Activated CD8-positive, alpha-beta T cell treated with anti-CD3 and anti-CD28 coated beads, Interleukin-2, amount 10 ng/mL, durations not matched to agents 7 days and 5 days (primary cell): ENCODE measurements at regions of chr16 and their contacts with region 1.

Region 1: DNA sequence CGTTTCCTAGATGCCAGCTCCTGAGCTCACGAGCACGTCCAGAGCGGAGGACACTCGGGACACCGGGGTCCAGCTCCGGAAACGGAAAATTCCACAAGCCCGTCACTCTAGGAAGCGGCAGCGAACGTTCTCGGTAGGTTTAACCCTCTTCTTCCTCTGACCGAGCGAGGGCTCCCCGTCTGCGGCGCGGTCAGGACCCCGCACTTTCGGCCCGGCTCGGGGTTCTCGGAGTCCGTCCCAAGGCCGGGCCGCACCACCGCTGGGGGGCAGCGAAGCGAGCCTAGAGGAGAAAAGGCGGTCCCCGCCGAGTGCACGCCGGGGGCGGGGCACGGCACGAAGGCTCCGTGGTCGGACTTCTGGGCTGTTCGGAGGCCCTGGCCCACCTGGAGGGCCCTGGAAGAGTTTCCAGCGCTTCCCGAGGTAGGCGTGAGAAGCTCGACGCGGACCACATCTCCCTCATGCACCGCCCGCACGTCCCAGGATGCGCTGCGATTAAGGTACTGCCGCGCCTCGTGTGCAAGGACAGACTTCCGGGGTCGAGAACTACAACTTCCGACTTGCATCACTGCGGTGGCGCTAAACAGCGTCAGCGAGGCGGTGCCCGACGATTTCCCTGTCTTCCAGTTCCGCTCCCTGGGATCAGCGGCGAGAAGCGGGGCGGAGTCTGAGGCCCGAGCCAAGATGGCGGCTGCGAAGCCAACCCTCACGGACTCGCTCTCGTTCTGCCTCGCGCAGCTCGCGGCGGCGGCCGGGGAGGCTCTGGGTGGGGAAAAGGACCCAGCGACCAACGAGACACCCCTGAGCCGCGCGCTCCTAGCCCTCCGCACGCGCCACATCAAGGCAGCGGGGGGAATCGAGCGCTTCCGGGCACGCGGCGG is at the start of gene ARMC5:
- DNase-seq: peak; percentile 98
- ATAC-seq: peak; percentile 74
- H3K4me3 Mint-ChIP-seq: peak within 1 kb of the TSS; percentile 91
- H3K27ac Mint-ChIP-seq: peak within 1 kb of the TSS; percentile 99
- H3K4me1 Mint-ChIP-seq: peaks cover 48% of the 10 kb centered on the region
- H3K27me3 Mint-ChIP-seq: no peaks in the 10 kb centered on the region
- total RNA-seq, gene ARMC5: 18.9 to 19.1 TPM

Region 2: GRCh38 chr16:31064882-31065461 is 394.1 kb before region 1 on chr16:
- CTCF ChIA-PET with region 1: no interaction called
- POLR2A ChIA-PET with region 1: no interaction called
- DNase-seq: no peak
- ATAC-seq: peak; percentile 53
- H3K4me3 Mint-ChIP-seq: peak overlapping the region; percentile 73
- H3K27ac Mint-ChIP-seq: peak overlapping the region; percentile 89
- H3K4me1 Mint-ChIP-seq: peaks cover 62% of the 10 kb centered on the region
- H3K27me3 Mint-ChIP-seq: no peaks in the 10 kb centered on the region

Region 3: GRCh38 chr16:31179747-31180459 is 279.2 kb before region 1 on chr16 and contains the start of gene FUS:
- CTCF ChIA-PET with region 1: interaction called, 3 read pairs
- POLR2A ChIA-PET with region 1: interaction called, 26 read pairs
- DNase-seq: peak; percentile 92
- ATAC-seq: peak; percentile 56
- H3K4me3 Mint-ChIP-seq: peak within 1 kb of the TSS; percentile 94
- H3K27ac Mint-ChIP-seq: peak within 1 kb of the TSS; percentile 97
- H3K4me1 Mint-ChIP-seq: peaks cover 56% of the 10 kb centered on the region
- H3K27me3 Mint-ChIP-seq: no peaks in the 10 kb centered on the region
- total RNA-seq, gene FUS: 536 to 569 TPM

Region 4: GRCh38 chr16:31202414-31203375 is 256.4 kb before region 1 on chr16 and contains the start of gene PYCARD:
- CTCF ChIA-PET with region 1: interaction called, 20 read pairs
- POLR2A ChIA-PET with region 1: interaction called, 4 read pairs
- DNase-seq: peak; percentile 58
- ATAC-seq: peak; percentile 37
- H3K4me3 Mint-ChIP-seq: peak within 1 kb of the TSS; percentile 89
- H3K27ac Mint-ChIP-seq: peak within 1 kb of the TSS; percentile 64
- H3K4me1 Mint-ChIP-seq: peaks cover 62% of the 10 kb centered on the region
- H3K27me3 Mint-ChIP-seq: no peaks in the 10 kb centered on the region
- total RNA-seq, gene PYCARD: 97.7 to 99.5 TPM

Region 5: DNA sequence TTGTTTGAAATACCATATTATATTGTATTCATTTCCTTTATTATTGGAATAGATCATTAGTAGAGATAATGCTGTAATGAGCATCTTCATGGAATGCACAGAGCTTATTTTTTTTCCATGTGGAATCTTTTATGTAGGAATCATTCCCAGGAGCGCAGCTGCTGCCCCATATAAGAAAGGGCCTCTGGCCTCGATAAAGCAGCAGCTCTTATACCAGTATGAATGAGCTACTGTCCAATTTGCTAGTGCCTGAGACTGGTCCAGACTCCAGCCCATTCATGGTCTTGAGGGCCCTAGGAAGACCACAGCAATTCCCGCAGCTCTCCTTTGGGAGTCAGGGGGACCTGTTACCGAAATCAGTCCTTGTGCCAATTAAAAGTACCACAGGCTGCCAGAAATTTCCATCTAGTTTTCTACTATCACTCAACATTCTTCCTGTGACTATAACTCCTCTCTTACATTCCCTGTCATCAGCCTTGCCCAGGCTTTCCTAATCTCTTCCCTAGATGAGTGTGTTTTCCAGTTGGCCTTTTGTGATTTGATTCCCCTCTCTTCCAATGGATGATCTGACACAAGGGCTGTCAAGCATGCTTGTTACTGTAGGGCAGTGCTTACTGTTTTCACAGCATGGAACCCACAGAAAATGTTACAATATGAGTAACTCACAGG is 18.4 kb before region 1 on chr16:
- CTCF ChIA-PET with region 1: interaction called, 40 read pairs
- POLR2A ChIA-PET with region 1: interaction called, 4 read pairs
- DNase-seq: no peak
- ATAC-seq: no peak
- H3K4me3 Mint-ChIP-seq: no peak overlapping the region
- H3K27ac Mint-ChIP-seq: no peak overlapping the region
- H3K4me1 Mint-ChIP-seq: peaks cover 29% of the 10 kb centered on the region
- H3K27me3 Mint-ChIP-seq: peaks cover 5% of the 10 kb centered on the region

Region 6: DNA sequence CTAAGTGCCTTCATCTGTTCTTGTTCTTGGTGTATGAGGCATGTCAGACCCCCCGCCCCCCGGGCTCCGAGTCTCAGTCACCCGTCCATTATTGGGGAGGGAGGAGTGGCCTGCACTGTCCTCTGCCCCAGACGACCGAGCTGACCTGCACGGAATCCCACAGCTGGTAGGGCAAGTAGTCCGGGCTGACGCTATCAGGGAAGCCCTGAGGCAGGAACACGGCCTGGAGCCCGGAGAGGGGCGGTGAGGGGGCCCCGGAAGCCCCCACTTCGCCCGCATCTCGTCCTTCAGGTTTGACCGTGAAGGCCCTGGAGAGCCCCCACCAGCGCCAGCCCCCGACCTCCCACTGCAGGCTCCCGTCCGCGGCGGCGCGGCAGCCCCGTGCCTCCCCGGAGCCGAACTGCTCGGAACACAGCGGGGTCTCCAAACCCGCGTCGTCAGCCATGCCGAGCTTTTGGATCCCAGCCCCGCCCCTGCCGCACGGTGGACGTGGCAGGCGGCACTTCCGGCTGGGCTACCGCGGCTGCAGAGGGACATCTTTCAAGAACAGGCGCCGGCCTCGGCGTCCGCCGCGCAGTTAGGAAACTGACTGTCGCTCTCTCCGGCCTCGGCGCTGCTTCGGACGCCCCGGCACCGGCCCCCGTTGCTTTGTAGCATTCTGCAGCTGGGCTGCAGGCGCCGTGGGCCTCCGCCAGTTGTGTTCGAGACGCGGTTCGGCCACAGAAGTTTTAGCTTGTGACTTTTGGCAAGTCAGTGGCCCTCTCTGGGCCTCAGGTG is 49.0 kb after region 1 on chr16 and contains the start of gene RUSF1:
- CTCF ChIA-PET with region 1: interaction called, 5 read pairs
- POLR2A ChIA-PET with region 1: interaction called, 15 read pairs
- DNase-seq: peak; percentile 89
- ATAC-seq: peak; percentile 91
- H3K4me3 Mint-ChIP-seq: peak within 1 kb of the TSS; percentile 96
- H3K27ac Mint-ChIP-seq: peak within 1 kb of the TSS; percentile 94
- H3K4me1 Mint-ChIP-seq: peaks cover 47% of the 10 kb centered on the region
- H3K27me3 Mint-ChIP-seq: no peaks in the 10 kb centered on the region
- total RNA-seq, gene RUSF1: 31.7 to 32.8 TPM

Region 7: DNA sequence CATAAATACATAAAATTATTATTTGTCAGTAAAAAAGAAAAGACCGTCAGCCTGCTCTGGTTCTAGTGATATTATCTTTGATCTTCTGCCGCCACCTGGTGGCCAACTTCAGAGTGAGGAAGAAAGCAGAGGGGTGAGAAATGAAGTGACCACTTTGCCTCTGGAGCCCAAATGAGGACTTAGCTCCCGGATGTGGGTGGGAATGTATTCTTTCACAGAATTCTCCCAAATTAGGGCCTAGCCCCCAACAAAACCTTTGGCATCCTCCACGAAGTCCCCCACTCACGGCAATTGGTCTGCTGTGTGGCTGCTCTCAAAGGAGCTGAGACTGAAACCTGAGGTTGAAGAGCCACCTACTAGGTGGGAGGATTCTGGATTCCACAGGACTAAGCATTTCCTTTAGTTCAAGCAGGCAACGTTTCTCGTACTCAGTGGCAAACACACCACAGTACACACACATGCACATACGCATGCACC is 409.6 kb after region 1 on chr16:
- CTCF ChIA-PET with region 1: interaction called, 76 read pairs
- POLR2A ChIA-PET with region 1: interaction called, 30 read pairs
- DNase-seq: peak; percentile 89
- ATAC-seq: peak; percentile 40
- H3K4me3 Mint-ChIP-seq: peak overlapping the region; percentile 64
- H3K27ac Mint-ChIP-seq: peak overlapping the region; percentile 82
- H3K4me1 Mint-ChIP-seq: peaks cover 65% of the 10 kb centered on the region
- H3K27me3 Mint-ChIP-seq: no peaks in the 10 kb centered on the region